ENCODE measurements at regions of chrX and their contacts with region 1.

Region 1: DNA sequence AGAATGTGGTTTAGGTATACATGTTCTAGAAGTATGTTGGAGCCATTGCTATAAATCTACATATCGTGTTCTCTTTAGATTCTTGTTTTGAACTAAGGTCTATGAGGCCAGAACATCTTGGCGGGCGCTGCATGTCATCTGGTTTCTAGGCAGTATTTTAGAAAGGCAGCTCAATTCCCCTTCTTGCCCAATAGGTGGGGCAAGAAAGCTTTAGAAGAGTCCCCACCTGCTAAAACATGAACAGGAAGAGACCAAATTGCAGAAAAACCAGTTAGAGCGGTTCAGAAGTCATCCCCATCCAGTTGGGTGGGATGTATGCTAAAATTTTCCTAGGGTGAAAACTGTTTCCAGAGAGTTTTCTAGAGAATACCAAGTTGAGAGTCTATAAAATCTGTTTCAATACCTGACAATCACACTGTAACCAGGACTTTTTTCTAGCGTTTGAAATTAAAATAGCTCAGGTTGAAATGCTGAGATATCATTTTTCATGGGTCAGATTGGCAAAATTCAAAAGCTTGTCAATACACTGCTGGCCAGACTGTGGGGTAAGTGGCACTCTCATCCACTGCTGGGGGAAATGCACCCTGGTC is 17.5 kb upstream of the SH3KBP1 start:
- DNase-seq: peak; percentile 72
- H3K4me3 ChIP-seq: no peak overlapping the region
- H3K27ac ChIP-seq: no peak overlapping the region
- H3K4me1 ChIP-seq: peaks cover 10% of the 10 kb centered on the region
- CTCF ChIP-seq: peak; percentile 84

Region 2: GRCh38 chrX:19747652-19748610 is 156.9 kb before region 1 on chrX:
- CTCF ChIA-PET with region 1: no interaction called
- POLR2A ChIA-PET with region 1: no interaction called
- intact Hi-C with region 1: no loop called
- DNase-seq: peak; percentile 83
- H3K4me3 ChIP-seq: peak overlapping the region; percentile 53
- H3K27ac ChIP-seq: peak overlapping the region; percentile 97
- H3K4me1 ChIP-seq: peaks cover 98% of the 10 kb centered on the region
- CTCF ChIP-seq: no peak

Region 3: DNA sequence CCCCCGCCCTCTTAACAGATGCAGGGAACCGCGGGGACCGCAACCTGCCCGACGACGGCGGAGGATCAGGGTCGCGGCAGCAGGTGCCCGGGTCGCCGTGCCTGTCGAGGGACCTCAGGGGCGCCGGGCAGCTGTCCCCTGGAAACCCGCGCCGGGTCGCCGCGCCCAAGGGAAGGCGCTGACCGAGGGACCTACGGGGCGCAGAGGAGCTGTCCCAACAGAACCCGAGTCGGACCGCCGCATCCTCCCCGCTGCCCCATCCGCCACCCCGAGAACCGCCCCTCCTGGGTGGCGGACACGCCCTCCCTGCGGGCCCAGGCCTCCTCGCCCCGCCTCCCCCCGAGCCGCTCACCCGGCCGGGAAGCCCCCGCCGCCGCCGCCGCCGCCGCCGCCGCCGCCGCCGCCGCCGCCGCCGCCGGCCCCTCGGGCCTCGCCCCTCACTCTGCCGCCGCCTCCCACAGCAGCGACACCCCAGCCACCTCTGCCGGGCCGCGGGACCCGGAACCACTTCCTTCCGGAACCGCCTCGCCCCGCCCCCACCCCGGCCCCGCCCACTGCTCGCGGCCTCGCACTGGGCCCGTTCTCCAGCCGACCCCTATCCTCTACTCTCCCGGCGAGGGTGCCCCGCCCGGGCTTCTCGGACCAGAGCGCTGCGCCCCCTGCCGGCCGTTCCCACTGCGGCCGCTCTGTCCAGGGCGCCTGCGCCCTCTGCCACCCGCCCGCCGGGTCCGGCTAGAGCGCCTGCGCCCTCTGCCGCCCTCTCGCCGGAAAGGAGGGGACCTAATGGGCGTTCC is 85.9 kb after region 1 on chrX and contains the start of gene BCLAF3:
- CTCF ChIA-PET with region 1: no interaction called
- POLR2A ChIA-PET with region 1: no interaction called
- intact Hi-C with region 1: loop called (anchors 1 kb)
- DNase-seq: peak; percentile 91
- H3K4me3 ChIP-seq: peak within 1 kb of the TSS; percentile 82
- H3K27ac ChIP-seq: no peak within 1 kb of the TSS
- H3K4me1 ChIP-seq: peaks cover 18% of the 10 kb centered on the region
- CTCF ChIP-seq: peak; percentile 75
- total RNA-seq, gene BCLAF3: 5.1 and 5.8 TPM in 2 replicates

Region 4: DNA sequence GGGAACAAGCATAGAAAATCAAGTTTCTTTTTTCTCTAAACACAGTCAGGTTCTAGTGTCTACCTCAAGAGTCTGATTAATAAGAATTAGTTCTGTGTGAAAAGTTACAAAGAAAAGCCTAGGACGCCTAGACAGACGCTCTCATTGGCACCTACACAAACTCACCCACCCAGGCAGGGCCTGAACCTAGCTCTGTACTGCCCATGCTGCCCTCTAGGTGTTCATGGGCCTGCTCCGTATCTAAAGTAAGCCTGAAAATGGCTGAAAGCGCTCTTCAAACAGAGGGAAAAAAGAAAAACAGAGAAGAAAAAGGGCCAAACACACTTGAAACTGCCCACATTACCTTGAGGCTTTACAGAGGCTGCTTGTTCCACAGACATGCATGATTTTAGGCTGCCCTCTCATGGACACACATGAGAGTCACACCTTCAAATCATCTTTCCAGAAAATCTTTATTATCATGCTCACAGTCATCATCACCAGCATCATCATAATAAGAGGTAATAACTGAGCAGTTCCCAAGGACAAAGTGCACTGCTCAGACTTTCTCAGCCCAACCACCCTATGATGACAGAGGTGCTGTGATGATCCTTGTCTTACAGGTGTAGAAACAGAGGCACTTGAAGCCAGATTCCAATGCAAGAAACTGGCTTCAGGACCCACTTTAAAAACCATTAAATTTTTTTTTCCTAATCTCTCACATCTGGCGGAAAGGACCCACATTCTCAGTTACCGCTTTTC is 162.3 kb after region 1 on chrX:
- CTCF ChIA-PET with region 1: interaction called, 8 read pairs
- POLR2A ChIA-PET with region 1: no interaction called
- intact Hi-C with region 1: loop called (anchors 1 kb)
- DNase-seq: peak; percentile 67
- H3K4me3 ChIP-seq: no peak overlapping the region
- H3K27ac ChIP-seq: no peak overlapping the region
- H3K4me1 ChIP-seq: peaks cover 17% of the 10 kb centered on the region
- CTCF ChIP-seq: peak; percentile 78

Region 5: DNA sequence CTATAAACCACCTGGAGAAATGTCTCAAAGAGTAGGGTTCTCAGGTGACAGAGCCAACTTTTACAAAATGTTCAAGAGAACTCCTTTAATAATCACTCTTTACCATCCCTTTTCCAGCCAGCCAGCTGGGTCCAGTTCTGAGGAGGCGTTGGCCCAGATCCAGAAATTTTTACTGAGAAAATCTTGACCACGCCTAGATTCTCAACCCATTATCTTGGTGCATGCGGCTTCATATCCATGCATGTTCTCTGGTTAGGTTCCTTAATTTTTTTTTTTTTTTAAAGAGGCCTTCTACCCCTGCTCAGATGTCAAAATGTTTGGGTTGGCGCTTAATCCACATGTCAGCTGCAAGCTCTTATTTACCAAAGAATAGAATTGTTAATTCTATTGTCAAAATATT is 223.8 kb after region 1 on chrX:
- CTCF ChIA-PET with region 1: no interaction called
- POLR2A ChIA-PET with region 1: no interaction called
- intact Hi-C with region 1: loop called (anchors 2 kb)
- DNase-seq: no peak
- H3K4me3 ChIP-seq: no peak overlapping the region
- H3K27ac ChIP-seq: no peak overlapping the region
- H3K4me1 ChIP-seq: no peaks in the 10 kb centered on the region
- CTCF ChIP-seq: no peak

Measured in OCI-LY7 (cell line).